ENCODE measurements at regions of chr16 and their contacts with region 1.

Region 1: DNA sequence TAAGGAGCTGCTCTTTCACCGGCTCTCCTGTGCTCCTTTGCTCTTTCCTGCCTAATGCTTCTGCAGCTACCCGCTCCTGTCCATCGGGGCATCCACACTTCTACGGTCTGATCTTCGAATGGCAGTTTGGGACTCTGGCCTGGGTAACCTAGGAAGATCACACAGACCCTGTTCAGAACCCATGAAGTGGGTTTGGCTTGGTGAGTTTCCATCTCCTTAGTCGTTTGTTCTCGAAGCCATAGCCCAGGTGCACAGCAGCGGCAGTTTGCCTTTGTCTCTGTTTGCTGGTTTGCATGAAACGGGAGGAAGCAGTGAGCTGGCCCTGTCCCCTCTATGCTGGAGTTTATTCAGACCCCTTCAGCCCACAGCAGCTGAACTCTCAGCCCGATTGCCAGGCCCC is 29.0 kb downstream of the PSMD7 start:
- DNase-seq: no peak
- ATAC-seq: no peak
- H3K4me3 ChIP-seq: no peak overlapping the region
- H3K27ac ChIP-seq: no peak overlapping the region
- H3K4me1 ChIP-seq: no peaks in the 10 kb centered on the region
- H3K27me3 ChIP-seq: no peaks in the 10 kb centered on the region
- CTCF ChIP-seq: no peak
- EP300 ChIP-seq: no peak
- POLR2A ChIP-seq: no peak
- RAD21 ChIP-seq: no peak

Region 2: GRCh38 chr16:74431516-74431915 is 105.9 kb after region 1 on chr16:
- CTCF ChIA-PET with region 1: no interaction called
- POLR2A ChIA-PET with region 1: no interaction called
- in situ Hi-C with region 1: loop called (anchors 5 kb)
- intact Hi-C with region 1: no loop called
- DNase-seq: peak in 1 of 4 experiments; percentile 2
- ATAC-seq: no peak
- H3K4me3 ChIP-seq: no peak overlapping the region
- H3K27ac ChIP-seq: no peak overlapping the region
- H3K4me1 ChIP-seq: no peaks in the 10 kb centered on the region; a peak in 2 of 5 replicates
- H3K27me3 ChIP-seq: no peaks in the 10 kb centered on the region; a peak in 1 of 5 replicates
- CTCF ChIP-seq: no peak
- EP300 ChIP-seq: no peak
- POLR2A ChIP-seq: no peak
- RAD21 ChIP-seq: no peak

Region 3: DNA sequence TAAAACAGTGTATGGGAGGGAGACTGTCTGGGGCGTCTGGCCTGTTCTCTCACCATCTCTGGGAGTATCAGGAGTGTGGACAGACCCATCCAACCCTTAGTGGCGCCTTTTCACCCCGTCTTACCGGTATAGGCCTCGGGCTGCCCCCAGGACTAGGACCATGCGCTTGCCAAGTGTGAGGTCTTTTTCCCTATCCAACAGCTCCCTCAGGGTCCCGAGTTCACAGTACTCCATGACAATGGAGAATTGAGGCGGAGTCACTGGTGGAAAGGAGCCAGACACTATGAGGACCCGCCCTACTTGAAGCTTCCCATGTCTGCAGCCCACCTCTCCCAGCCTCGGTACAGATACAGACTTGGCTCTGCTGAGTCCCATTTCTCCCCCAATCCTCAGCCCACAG is 356.9 kb after region 1 on chr16:
- CTCF ChIA-PET with region 1: no interaction called
- POLR2A ChIA-PET with region 1: no interaction called
- in situ Hi-C with region 1: no loop called
- intact Hi-C with region 1: no loop called
- DNase-seq: no peak
- ATAC-seq: no peak; the same call in 2 of the 3 replicates
- H3K4me3 ChIP-seq: no peak overlapping the region
- H3K27ac ChIP-seq: no peak overlapping the region
- H3K4me1 ChIP-seq: peaks cover 0 to 6% of the 10 kb centered on the region in 2 experiments; a peak in 1 of 5 replicates
- H3K27me3 ChIP-seq: peaks cover 0 to 5% of the 10 kb centered on the region in 2 experiments; a peak in 2 of 5 replicates
- CTCF ChIP-seq: no peak
- EP300 ChIP-seq: no peak
- POLR2A ChIP-seq: no peak
- RAD21 ChIP-seq: no peak